ENCODE measurements at regions of chr4 and their contacts with region 1.

Region 1: DNA sequence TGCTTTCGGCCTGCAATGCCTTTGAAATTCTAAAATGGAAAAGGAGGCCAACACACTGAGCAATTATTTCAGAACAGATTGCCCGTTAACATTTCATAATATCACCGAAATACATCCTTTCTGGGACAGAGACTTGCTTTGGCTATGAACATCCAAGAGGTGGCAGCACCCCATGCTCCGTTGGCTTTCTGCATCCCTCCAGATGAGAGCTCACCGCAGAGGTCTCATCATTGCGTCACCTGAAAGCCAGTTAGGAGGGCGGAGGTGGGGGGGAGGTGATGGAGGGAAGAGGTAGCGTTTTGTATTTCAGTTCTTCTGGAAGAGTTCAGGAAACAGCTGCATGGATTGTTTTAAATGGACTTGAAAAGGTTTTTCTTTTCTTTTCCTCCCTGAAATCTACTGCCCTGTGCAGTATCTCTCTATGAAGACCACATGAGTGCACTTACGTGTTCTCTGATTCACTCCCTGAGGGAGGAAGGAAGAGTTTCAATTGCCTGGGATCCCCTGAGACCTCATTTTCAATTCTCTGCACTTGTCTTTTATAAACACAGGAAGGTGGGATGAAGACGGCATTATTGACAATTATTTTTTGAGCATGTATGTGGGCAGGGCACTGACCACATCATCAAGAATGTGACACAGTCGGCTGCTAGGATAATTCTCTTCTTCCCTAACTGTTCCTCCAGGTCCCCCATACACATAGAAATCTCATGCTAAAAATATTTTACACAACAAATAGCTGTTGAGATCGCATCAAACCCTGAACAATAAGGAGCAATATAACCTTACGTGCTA is 166.9 kb upstream of the PGRMC2 start:
- DNase-seq: peak; percentile 93
- H3K4me3 Mint-ChIP-seq: no peak overlapping the region
- H3K27ac Mint-ChIP-seq: no peak overlapping the region
- H3K4me1 Mint-ChIP-seq: peaks cover 20% of the 10 kb centered on the region
- H3K27me3 Mint-ChIP-seq: no peaks in the 10 kb centered on the region
- CTCF ChIP-seq: peak; percentile 86

Region 2: DNA sequence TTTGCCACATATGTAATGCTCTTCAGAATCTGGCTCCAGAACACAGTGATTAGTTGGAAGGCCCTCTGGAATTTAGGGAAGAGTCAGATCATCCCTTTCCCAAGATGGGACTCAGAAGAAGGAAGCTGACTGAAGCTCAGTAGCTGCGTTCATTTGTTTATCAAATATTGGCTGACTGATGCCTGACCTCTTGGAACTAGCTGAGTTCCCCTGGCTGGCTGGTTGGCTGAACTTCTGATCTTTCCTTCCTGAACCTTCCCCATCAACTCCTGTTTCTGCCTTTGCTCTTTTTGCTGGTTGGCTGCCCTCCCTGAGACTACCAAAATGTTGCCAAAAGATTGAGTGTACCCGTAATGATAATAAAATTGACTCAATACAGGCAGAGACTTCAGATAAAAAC is 1688.2 kb before region 1 on chr4:
- CTCF ChIA-PET with region 1: no interaction called
- POLR2A ChIA-PET with region 1: no interaction called
- intact Hi-C with region 1: no loop called
- DNase-seq: no peak
- H3K4me3 Mint-ChIP-seq: no peak overlapping the region
- H3K27ac Mint-ChIP-seq: no peak overlapping the region
- H3K4me1 Mint-ChIP-seq: no peaks in the 10 kb centered on the region
- H3K27me3 Mint-ChIP-seq: no peaks in the 10 kb centered on the region
- CTCF ChIP-seq: no peak

Region 3: DNA sequence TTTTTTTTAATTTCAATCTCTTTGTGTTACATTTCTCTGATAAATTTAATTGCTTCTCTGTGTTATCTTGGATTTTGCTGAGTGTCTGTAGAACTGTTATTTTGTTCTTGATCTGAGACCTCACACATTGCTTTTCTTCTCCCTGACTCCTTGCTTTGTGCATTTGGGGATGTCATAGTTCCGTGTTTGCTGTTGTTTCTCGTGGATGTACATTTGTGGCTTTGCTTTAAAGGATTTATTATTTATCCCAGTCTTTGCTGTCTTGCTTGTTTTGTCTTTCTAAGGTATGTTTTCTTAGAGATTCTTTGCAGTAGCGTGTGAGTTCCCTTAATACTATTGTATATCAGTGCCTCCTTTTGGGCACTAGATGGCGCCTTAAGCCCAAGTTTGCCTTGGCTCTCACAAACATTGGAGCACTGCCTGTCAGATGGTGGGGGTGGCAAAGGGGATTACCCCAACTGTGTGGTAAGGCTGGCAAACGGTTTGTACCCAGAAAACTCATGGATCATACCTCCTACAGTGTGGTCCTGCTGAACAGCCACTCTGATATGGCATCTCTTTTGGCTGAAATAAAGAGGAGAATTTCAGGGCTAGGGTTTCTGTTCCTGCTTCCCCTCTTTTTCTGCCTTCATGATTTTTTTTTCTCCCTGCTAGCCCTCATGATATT is 263.2 kb before region 1 on chr4:
- CTCF ChIA-PET with region 1: interaction called, 8 read pairs
- POLR2A ChIA-PET with region 1: interaction called, 3 read pairs
- intact Hi-C with region 1: loop called (anchors 1 kb)
- DNase-seq: peak; percentile 81
- H3K4me3 Mint-ChIP-seq: no peak overlapping the region
- H3K27ac Mint-ChIP-seq: no peak overlapping the region
- H3K4me1 Mint-ChIP-seq: peaks cover 6% of the 10 kb centered on the region
- H3K27me3 Mint-ChIP-seq: no peaks in the 10 kb centered on the region
- CTCF ChIP-seq: peak; percentile 77

Region 4: GRCh38 chr4:128267745-128268144 is 186.7 kb before region 1 on chr4:
- CTCF ChIA-PET with region 1: no interaction called
- POLR2A ChIA-PET with region 1: no interaction called
- intact Hi-C with region 1: no loop called
- DNase-seq: no peak
- H3K4me3 Mint-ChIP-seq: no peak overlapping the region
- H3K27ac Mint-ChIP-seq: no peak overlapping the region
- H3K4me1 Mint-ChIP-seq: no peaks in the 10 kb centered on the region
- H3K27me3 Mint-ChIP-seq: no peaks in the 10 kb centered on the region
- CTCF ChIP-seq: no peak

Region 5: GRCh38 chr4:128427832-128428366 is 26.6 kb before region 1 on chr4:
- CTCF ChIA-PET with region 1: interaction called, 21 read pairs
- POLR2A ChIA-PET with region 1: no interaction called
- intact Hi-C with region 1: no loop called
- DNase-seq: peak; percentile 88
- H3K4me3 Mint-ChIP-seq: peak overlapping the region; percentile 47
- H3K27ac Mint-ChIP-seq: no peak overlapping the region
- H3K4me1 Mint-ChIP-seq: peaks cover 22% of the 10 kb centered on the region
- H3K27me3 Mint-ChIP-seq: no peaks in the 10 kb centered on the region
- CTCF ChIP-seq: peak; percentile 42

Region 6: DNA sequence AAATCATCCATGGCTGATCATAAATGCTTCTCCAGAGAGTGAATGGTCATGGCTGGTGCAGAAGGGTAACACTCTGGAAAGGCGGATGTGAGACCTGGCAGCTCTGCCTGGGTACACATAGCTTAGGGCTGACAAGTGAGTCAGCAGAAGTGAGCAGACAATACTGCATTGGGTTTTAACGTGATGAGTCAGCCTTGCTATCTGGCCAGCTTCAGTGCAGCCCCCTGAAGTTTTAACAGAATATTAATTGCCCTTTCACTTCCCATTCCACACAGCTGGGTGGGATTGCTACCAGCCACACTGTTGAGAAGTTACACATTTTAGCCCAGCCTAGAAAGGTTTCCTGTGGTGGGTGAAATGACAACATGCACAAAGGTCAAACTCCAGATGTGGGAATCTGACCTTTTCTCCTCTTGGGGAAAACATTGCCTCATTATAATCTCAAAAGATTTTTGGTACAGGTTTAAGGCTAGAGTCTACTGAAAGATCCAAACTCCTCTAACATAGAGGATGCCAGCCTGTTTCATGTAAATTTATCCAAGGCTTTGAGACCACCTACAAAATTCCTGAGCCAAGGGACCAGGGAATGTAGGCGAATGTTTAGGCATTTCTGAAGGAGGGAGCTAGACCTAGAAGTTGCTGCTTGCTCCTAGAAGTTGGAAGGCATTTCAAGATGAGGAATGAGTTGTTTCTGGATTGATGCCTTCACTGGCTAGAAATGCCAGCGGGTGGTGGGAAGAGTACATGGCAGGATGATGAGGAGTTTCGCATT is 63.4 kb after region 1 on chr4:
- CTCF ChIA-PET with region 1: interaction called, 15 read pairs
- POLR2A ChIA-PET with region 1: interaction called, 6 read pairs
- intact Hi-C with region 1: no loop called
- DNase-seq: peak; percentile 93
- H3K4me3 Mint-ChIP-seq: peak overlapping the region; percentile 7
- H3K27ac Mint-ChIP-seq: peak overlapping the region; percentile 90
- H3K4me1 Mint-ChIP-seq: peaks cover 48% of the 10 kb centered on the region
- H3K27me3 Mint-ChIP-seq: no peaks in the 10 kb centered on the region
- CTCF ChIP-seq: no peak

Region 7: GRCh38 chr4:128565565-128566186 is 111.2 kb after region 1 on chr4:
- CTCF ChIA-PET with region 1: interaction called, 30 read pairs
- POLR2A ChIA-PET with region 1: no interaction called
- intact Hi-C with region 1: loop called (anchors 2 kb)
- DNase-seq: peak; percentile 61
- H3K4me3 Mint-ChIP-seq: no peak overlapping the region
- H3K27ac Mint-ChIP-seq: peak overlapping the region; percentile 13
- H3K4me1 Mint-ChIP-seq: peaks cover 17% of the 10 kb centered on the region
- H3K27me3 Mint-ChIP-seq: no peaks in the 10 kb centered on the region
- CTCF ChIP-seq: peak; percentile 59

Region 8: GRCh38 chr4:128639541-128640270 is 185.2 kb after region 1 on chr4:
- CTCF ChIA-PET with region 1: no interaction called
- POLR2A ChIA-PET with region 1: no interaction called
- intact Hi-C with region 1: loop called (anchors 5 kb)
- DNase-seq: no peak
- H3K4me3 Mint-ChIP-seq: no peak overlapping the region
- H3K27ac Mint-ChIP-seq: no peak overlapping the region
- H3K4me1 Mint-ChIP-seq: peaks cover 6% of the 10 kb centered on the region
- H3K27me3 Mint-ChIP-seq: no peaks in the 10 kb centered on the region
- CTCF ChIP-seq: no peak

Region 9: GRCh38 chr4:128863312-128864075 is 409.0 kb after region 1 on chr4:
- CTCF ChIA-PET with region 1: interaction called, 40 read pairs
- POLR2A ChIA-PET with region 1: no interaction called
- intact Hi-C with region 1: loop called (anchors 1 kb)
- DNase-seq: peak; percentile 89
- H3K4me3 Mint-ChIP-seq: no peak overlapping the region
- H3K27ac Mint-ChIP-seq: peak overlapping the region; percentile 47
- H3K4me1 Mint-ChIP-seq: peaks cover 3% of the 10 kb centered on the region
- H3K27me3 Mint-ChIP-seq: no peaks in the 10 kb centered on the region
- CTCF ChIP-seq: peak; percentile 63